Caco-2 (cell line): ENCODE measurements at regions of chr19 and their contacts with region 1.

Region 1: GRCh38 chr19:8208922-8209461 is at the start of gene CERS4:
- DNase-seq: peak; percentile 92 to 94
- H3K4me3 ChIP-seq: peak within 1 kb of the TSS; percentile 89
- H3K4me3 Mint-ChIP-seq: peak within 1 kb of the TSS; percentile 93
- H3K27ac Mint-ChIP-seq: peak within 1 kb of the TSS; percentile 86
- H3K4me1 ChIP-seq: peaks cover 41% of the 10 kb centered on the region
- H3K4me1 Mint-ChIP-seq: peaks cover 35% of the 10 kb centered on the region
- H3K27me3 ChIP-seq: no peaks in the 10 kb centered on the region
- H3K27me3 Mint-ChIP-seq: no peaks in the 10 kb centered on the region
- CTCF ChIP-seq: no peak
- total RNA-seq, gene CERS4: 56.8 and 66.9 TPM in 2 replicates

Region 2: GRCh38 chr19:7919610-7920518 is 289.1 kb before region 1 on chr19 and contains the start of gene SNAPC2:
- CTCF ChIA-PET with region 1: no interaction called
- POLR2A ChIA-PET with region 1: interaction called, 12 read pairs
- intact Hi-C with region 1: no loop called
- DNase-seq: peak; percentile 96
- H3K4me3 ChIP-seq: peak within 1 kb of the TSS; percentile 63
- H3K4me3 Mint-ChIP-seq: peak within 1 kb of the TSS; percentile 87
- H3K27ac Mint-ChIP-seq: peak within 1 kb of the TSS; percentile 83
- H3K4me1 ChIP-seq: peaks cover 16% of the 10 kb centered on the region
- H3K4me1 Mint-ChIP-seq: peaks cover 7% of the 10 kb centered on the region
- H3K27me3 ChIP-seq: no peaks in the 10 kb centered on the region
- H3K27me3 Mint-ChIP-seq: no peaks in the 10 kb centered on the region
- CTCF ChIP-seq: no peak
- total RNA-seq, gene SNAPC2: 8.8 and 10.4 TPM in 2 replicates

Region 3: GRCh38 chr19:8158411-8159074 is 50.4 kb before region 1 on chr19:
- CTCF ChIA-PET with region 1: interaction called, 3 read pairs
- POLR2A ChIA-PET with region 1: no interaction called
- intact Hi-C with region 1: loop called (anchors 5 kb)
- DNase-seq: peak; percentile 71 to 79
- H3K4me3 ChIP-seq: no peak overlapping the region
- H3K4me3 Mint-ChIP-seq: no peak overlapping the region
- H3K27ac Mint-ChIP-seq: no peak overlapping the region
- H3K4me1 ChIP-seq: peaks cover 3% of the 10 kb centered on the region; the same call in 1 of the 2 replicates
- H3K4me1 Mint-ChIP-seq: no peaks in the 10 kb centered on the region
- H3K27me3 ChIP-seq: no peaks in the 10 kb centered on the region
- H3K27me3 Mint-ChIP-seq: no peaks in the 10 kb centered on the region
- CTCF ChIP-seq: peak; percentile 59 to 72

Region 4: GRCh38 chr19:8245869-8246835 is 37.2 kb after region 1 on chr19:
- CTCF ChIA-PET with region 1: no interaction called
- POLR2A ChIA-PET with region 1: no interaction called
- intact Hi-C with region 1: loop called (anchors 5 kb)
- DNase-seq: peak; percentile 43 to 58
- H3K4me3 ChIP-seq: no peak overlapping the region
- H3K4me3 Mint-ChIP-seq: peak overlapping the region; percentile 21
- H3K27ac Mint-ChIP-seq: peak overlapping the region; percentile 79
- H3K4me1 ChIP-seq: peaks cover 23% of the 10 kb centered on the region
- H3K4me1 Mint-ChIP-seq: peaks cover 21% of the 10 kb centered on the region
- H3K27me3 ChIP-seq: no peaks in the 10 kb centered on the region
- H3K27me3 Mint-ChIP-seq: no peaks in the 10 kb centered on the region
- CTCF ChIP-seq: no peak

Region 5: GRCh38 chr19:8557642-8558238 is 348.7 kb after region 1 on chr19:
- CTCF ChIA-PET with region 1: no interaction called
- POLR2A ChIA-PET with region 1: no interaction called
- intact Hi-C with region 1: no loop called
- DNase-seq: no peak
- H3K4me3 ChIP-seq: no peak overlapping the region
- H3K4me3 Mint-ChIP-seq: no peak overlapping the region
- H3K27ac Mint-ChIP-seq: no peak overlapping the region
- H3K4me1 ChIP-seq: no peaks in the 10 kb centered on the region
- H3K4me1 Mint-ChIP-seq: peaks cover 7% of the 10 kb centered on the region
- H3K27me3 ChIP-seq: no peaks in the 10 kb centered on the region
- H3K27me3 Mint-ChIP-seq: no peaks in the 10 kb centered on the region
- CTCF ChIP-seq: no peak